CD8-positive, alpha-beta T cell (primary cell): ENCODE measurements at regions of chr6 and their contacts with region 1.

Region 1: GRCh38 chr6:107740496-107741190 is 83.5 kb downstream of the SCML4 start:
- DNase-seq: peak in 3 of 9 experiments; percentile 39 to 65 (median 46)
- ATAC-seq: peak; percentile 15
- H3K4me3 ChIP-seq: peak overlapping the region; percentile 30 to 41
- H3K4me3 Mint-ChIP-seq: peak overlapping the region; percentile 83
- H3K27ac ChIP-seq: peak overlapping the region; percentile 50 to 83
- H3K27ac Mint-ChIP-seq: peak overlapping the region; percentile 97
- H3K4me1 ChIP-seq: peaks cover 70% of the 10 kb centered on the region
- H3K4me1 Mint-ChIP-seq: peaks cover 81% of the 10 kb centered on the region
- H3K27me3 ChIP-seq: no peaks in the 10 kb centered on the region
- H3K27me3 Mint-ChIP-seq: no peaks in the 10 kb centered on the region
- CTCF ChIP-seq: no peak

Region 2: DNA sequence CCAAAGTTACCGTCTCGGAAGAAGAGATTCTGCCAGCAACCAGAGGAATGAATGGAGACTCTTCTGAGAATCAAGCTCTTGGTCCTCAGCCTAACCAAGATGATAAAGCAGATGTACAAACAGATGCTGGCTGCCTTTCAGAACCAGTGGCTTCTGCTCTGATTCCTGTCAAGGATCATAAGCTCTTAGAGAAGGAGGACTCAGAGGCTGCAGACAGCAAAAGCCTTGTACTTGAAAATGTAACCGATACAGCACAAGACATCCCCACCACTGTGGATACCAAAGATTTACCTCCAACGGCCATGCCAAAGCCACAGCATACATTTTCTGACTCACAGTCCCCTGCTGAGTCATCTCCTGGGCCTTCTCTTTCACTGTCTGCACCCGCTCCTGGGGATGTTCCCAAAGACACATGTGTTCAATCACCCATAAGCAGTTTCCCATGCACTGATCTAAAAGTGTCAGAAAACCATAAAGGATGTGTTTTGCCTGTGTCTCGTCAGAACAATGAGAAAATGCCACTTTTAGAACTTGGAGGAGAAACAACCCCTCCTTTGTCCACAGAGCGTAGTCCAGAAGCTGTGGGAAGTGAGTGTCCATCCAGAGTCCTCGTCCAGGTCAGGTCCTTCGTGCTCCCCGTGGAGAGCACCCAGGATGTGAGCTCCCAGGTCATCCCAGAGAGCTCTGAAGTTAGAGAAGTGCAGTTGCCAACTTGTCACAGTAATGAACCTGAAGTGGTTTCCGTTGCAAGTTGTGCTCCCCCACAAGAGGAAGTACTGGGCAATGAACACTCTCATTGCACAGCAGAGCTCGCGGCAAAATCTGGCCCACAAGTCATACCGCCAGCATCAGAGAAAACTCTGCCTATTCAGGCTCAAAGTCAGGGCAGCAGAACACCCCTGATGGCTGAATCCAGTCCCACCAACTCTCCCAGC is 1220.9 kb before region 1 on chr6:
- CTCF ChIA-PET with region 1: no interaction called
- POLR2A ChIA-PET with region 1: no interaction called
- intact Hi-C with region 1: loop called in 1 of 2 experiments (anchors 10 kb)
- DNase-seq: peak; percentile 41 to 93 (median 77)
- ATAC-seq: peak; percentile 50
- H3K4me3 ChIP-seq: peak overlapping the region; percentile 48 to 51
- H3K4me3 Mint-ChIP-seq: peak overlapping the region; percentile 91
- H3K27ac ChIP-seq: peak overlapping the region; percentile 79 to 82
- H3K27ac Mint-ChIP-seq: peak overlapping the region; percentile 96
- H3K4me1 ChIP-seq: peaks cover 48% of the 10 kb centered on the region
- H3K4me1 Mint-ChIP-seq: peaks cover 76% of the 10 kb centered on the region
- H3K27me3 ChIP-seq: no peaks in the 10 kb centered on the region
- H3K27me3 Mint-ChIP-seq: no peaks in the 10 kb centered on the region
- CTCF ChIP-seq: no peak

Region 3: DNA sequence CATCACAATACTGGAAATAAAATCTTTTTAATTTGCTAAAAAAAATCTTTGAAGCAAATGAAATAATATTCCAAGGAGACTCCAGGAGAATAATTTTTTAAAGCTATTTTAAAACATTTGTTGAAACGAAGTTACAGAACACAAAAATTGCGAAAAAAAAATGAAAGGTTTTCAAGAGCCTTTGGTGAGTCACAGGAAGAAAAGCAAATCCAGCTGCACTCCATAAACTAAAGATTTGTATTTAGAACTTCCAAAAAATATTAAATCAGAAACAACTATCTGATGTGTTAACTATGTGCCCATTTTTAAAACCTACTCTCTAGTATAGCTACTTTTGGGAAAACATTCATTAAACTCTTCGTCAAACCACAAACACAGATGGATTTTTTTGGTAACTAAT is 304.8 kb before region 1 on chr6:
- CTCF ChIA-PET with region 1: no interaction called
- POLR2A ChIA-PET with region 1: no interaction called
- intact Hi-C with region 1: no loop called
- DNase-seq: no peak
- ATAC-seq: no peak
- H3K4me3 ChIP-seq: no peak overlapping the region
- H3K4me3 Mint-ChIP-seq: no peak overlapping the region
- H3K27ac ChIP-seq: no peak overlapping the region
- H3K27ac Mint-ChIP-seq: no peak overlapping the region
- H3K4me1 ChIP-seq: no peaks in the 10 kb centered on the region
- H3K4me1 Mint-ChIP-seq: peaks cover 39% of the 10 kb centered on the region
- H3K27me3 ChIP-seq: no peaks in the 10 kb centered on the region
- H3K27me3 Mint-ChIP-seq: no peaks in the 10 kb centered on the region
- CTCF ChIP-seq: no peak

Region 4: GRCh38 chr6:107756660-107757355 is 16.2 kb after region 1 on chr6:
- CTCF ChIA-PET with region 1: interaction called, 4 read pairs
- POLR2A ChIA-PET with region 1: interaction called, 7 read pairs
- intact Hi-C with region 1: loop called in 1 of 2 experiments (anchors 2 kb)
- DNase-seq: peak in 1 of 9 experiments; percentile 29
- ATAC-seq: peak; percentile 31
- H3K4me3 ChIP-seq: no peak overlapping the region
- H3K4me3 Mint-ChIP-seq: peak overlapping the region; percentile 0
- H3K27ac ChIP-seq: peak overlapping the region in 1 of 2 experiments; percentile 64
- H3K27ac Mint-ChIP-seq: peak overlapping the region; percentile 81
- H3K4me1 ChIP-seq: peaks cover 24% of the 10 kb centered on the region
- H3K4me1 Mint-ChIP-seq: peaks cover 63% of the 10 kb centered on the region
- H3K27me3 ChIP-seq: no peaks in the 10 kb centered on the region
- H3K27me3 Mint-ChIP-seq: no peaks in the 10 kb centered on the region
- CTCF ChIP-seq: no peak

Region 5: DNA sequence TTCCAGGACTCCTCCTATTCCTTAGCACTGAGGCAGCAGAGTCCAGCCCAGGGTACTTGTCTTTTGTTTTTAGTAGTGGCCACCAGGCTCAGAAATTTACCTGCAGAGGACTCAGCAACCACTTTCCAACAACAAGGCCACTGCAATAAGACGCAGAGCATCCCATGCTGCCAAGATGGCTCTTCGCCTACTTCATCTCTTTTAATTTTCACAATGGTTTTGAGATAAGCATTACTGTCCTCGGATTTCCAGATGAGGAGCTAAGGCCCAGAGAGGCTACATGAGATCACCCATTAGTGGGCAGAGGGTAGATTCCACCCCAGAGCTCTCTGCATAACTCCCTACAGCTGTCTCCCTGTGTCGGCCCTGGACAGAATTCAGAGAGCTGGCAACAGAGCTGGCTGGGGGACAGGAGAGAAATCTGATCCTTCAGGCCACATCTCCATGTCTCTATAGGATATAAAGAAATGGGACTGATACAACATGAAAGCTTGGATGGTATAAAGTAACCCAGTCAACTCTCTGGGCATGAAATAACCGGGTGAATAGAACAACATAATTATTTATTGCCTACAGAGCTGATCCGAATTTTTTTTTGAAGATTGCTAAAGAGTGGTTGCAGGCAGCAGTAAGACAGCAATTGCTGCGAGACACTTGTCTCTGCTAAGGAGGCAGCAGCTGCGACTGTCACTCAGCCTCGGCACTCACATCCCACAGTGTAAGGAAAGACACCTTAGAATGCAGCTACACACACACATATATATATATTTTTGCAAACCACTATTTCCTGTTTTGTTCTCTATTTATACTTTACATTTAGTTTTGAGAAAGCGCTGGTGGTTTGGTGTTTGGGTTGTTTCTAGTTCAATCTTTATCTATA is 46.3 kb after region 1 on chr6:
- CTCF ChIA-PET with region 1: interaction called, 5 read pairs
- POLR2A ChIA-PET with region 1: interaction called, 24 read pairs
- intact Hi-C with region 1: loop called (anchors 2 to 5 kb)
- DNase-seq: peak in 8 of 9 experiments; percentile 32 to 75 (median 56)
- ATAC-seq: peak; percentile 75
- H3K4me3 ChIP-seq: peak overlapping the region; percentile 7 to 19
- H3K4me3 Mint-ChIP-seq: peak overlapping the region; percentile 72
- H3K27ac ChIP-seq: peak overlapping the region; percentile 29 to 78
- H3K27ac Mint-ChIP-seq: peak overlapping the region; percentile 85
- H3K4me1 ChIP-seq: peaks cover 78% of the 10 kb centered on the region
- H3K4me1 Mint-ChIP-seq: peaks cover 87% of the 10 kb centered on the region
- H3K27me3 ChIP-seq: no peaks in the 10 kb centered on the region
- H3K27me3 Mint-ChIP-seq: no peaks in the 10 kb centered on the region
- CTCF ChIP-seq: no peak

Region 6: DNA sequence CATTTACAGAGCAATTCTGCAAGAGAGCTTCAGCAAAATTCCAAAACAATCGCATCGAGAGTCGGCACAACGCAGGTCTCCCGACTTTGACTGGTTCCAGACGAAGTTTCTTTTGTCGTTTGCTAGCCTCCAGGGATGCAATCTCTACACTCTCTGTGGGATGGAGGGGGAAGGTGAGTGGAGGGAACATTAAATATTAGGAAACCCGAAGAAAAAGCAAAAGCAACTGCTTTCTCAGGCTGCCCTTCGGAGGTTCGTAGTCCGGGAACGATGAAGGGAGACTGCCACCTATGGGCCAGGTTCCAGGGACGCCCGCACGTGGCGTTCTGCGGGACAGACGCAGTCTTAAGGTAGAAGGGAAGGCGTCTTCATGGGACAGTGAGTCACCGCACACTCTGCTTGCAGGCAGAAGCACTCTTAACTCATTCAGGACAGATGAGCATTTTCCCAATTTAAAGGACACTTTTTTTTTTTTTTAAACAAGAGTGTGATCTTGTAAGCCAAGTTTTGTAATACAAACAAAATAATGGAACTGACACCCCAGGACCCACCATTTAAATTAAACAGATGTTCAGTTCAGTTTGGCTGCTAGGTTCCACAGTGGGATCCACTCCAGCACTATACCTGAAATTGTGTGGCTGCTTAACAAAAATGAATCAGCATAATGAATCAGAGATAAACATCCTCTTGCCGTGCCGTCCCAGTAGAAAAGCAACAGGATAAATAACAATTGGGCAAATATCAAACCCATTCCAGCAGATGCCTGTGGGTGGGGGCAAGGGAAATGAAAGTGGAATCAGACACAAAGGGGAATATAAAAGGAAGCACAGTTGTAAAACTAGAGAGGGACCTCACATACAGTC is 1041.8 kb after region 1 on chr6:
- CTCF ChIA-PET with region 1: no interaction called
- POLR2A ChIA-PET with region 1: no interaction called
- intact Hi-C with region 1: no loop called
- DNase-seq: peak; percentile 55 to 86 (median 78)
- ATAC-seq: peak; percentile 100
- H3K4me3 ChIP-seq: peak overlapping the region; percentile 56
- H3K4me3 Mint-ChIP-seq: peak overlapping the region; percentile 85
- H3K27ac ChIP-seq: no peak overlapping the region
- H3K27ac Mint-ChIP-seq: no peak overlapping the region
- H3K4me1 ChIP-seq: peaks cover 6% of the 10 kb centered on the region
- H3K4me1 Mint-ChIP-seq: peaks cover 8% of the 10 kb centered on the region
- H3K27me3 ChIP-seq: no peaks in the 10 kb centered on the region
- H3K27me3 Mint-ChIP-seq: no peaks in the 10 kb centered on the region
- CTCF ChIP-seq: peak; percentile 69